Activated CD4-positive, alpha-beta T cell treated with anti-CD3 and anti-CD28 coated beads for 36 hours (primary cell): ENCODE measurements at regions of chr9 and their contacts with region 1.

Region 1: GRCh38 chr9:129641746-129642513 is at the start of gene ASB6:
- DNase-seq: peak; percentile 97
- ATAC-seq: peak; percentile 97
- H3K4me3 Mint-ChIP-seq: peak within 1 kb of the TSS; percentile 87
- H3K27ac Mint-ChIP-seq: peak within 1 kb of the TSS; percentile 73
- H3K4me1 Mint-ChIP-seq: peaks cover 18% of the 10 kb centered on the region
- H3K27me3 Mint-ChIP-seq: no peaks in the 10 kb centered on the region
- total RNA-seq, gene ASB6: 13.4 to 15.0 TPM

Region 2: DNA sequence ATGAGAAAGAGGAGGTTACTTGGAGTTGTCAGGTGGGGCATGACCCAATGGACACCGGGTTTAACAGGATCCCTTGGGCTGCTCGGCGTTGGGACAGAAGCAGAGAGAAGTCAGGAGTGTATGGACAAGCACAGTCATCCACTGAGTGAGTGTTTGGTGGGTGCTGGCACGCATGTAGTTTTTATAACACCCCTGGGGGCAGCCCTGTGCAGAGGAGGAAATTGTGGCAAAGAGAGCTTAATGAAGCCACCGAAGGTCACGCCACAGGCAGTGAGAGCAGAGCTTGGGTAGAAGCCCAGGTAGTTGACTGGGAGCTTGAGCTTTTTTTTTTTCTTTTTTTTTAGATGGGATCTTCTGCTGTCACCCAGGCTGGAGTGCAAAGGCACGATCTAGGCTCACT is 420.7 kb before region 1 on chr9:
- CTCF ChIA-PET with region 1: no interaction called
- POLR2A ChIA-PET with region 1: no interaction called
- intact Hi-C with region 1: no loop called
- DNase-seq: peak; percentile 34
- ATAC-seq: peak; percentile 61
- H3K4me3 Mint-ChIP-seq: no peak overlapping the region
- H3K27ac Mint-ChIP-seq: peak overlapping the region; percentile 4
- H3K4me1 Mint-ChIP-seq: peaks cover 28% of the 10 kb centered on the region
- H3K27me3 Mint-ChIP-seq: no peaks in the 10 kb centered on the region

Region 3: DNA sequence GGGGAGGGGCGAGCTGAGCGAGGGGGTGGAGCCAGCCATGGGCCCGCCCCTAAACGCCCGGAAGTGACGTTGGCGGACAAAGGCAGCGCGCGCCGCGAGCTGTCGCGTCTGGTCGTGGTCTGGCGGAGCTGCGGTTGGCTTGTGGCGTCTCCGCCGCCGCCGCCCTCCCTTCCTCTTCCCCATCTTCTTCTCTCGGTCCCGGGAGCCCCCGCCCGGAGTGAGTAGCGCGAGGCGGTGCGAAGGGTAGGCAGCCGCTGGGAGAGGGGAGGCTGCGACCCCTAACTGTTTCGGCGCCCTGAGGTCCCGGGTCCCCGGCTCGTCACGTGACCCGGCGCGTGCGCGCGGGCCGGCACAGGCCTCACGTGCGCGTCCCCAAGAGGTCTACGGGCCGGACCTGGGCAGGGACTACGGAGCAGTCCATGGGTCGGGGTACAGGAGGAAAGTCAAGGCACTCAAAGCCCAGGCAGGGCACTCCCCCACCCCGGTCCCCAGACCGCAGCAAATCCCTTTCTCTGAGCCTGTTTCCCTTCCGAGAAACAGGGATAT is 15.8 kb before region 1 on chr9 and contains the start of gene NTMT1:
- CTCF ChIA-PET with region 1: interaction called, 21 read pairs
- POLR2A ChIA-PET with region 1: interaction called, 5 read pairs
- intact Hi-C with region 1: loop called (anchors 1 kb)
- DNase-seq: peak; percentile 95
- ATAC-seq: peak; percentile 76
- H3K4me3 Mint-ChIP-seq: peak within 1 kb of the TSS; percentile 77
- H3K27ac Mint-ChIP-seq: peak within 1 kb of the TSS; percentile 93
- H3K4me1 Mint-ChIP-seq: peaks cover 52% of the 10 kb centered on the region
- H3K27me3 Mint-ChIP-seq: peaks cover 4% of the 10 kb centered on the region
- total RNA-seq, gene NTMT1: 50.1 to 69.2 TPM

Region 4: GRCh38 chr9:129719135-129719534 is 77.2 kb after region 1 on chr9:
- CTCF ChIA-PET with region 1: no interaction called
- POLR2A ChIA-PET with region 1: no interaction called
- intact Hi-C with region 1: loop called (anchors 2 to 10 kb)
- DNase-seq: peak; percentile 27
- ATAC-seq: no peak
- H3K4me3 Mint-ChIP-seq: no peak overlapping the region
- H3K27ac Mint-ChIP-seq: no peak overlapping the region
- H3K4me1 Mint-ChIP-seq: no peaks in the 10 kb centered on the region
- H3K27me3 Mint-ChIP-seq: peaks cover 4% of the 10 kb centered on the region

Region 5: DNA sequence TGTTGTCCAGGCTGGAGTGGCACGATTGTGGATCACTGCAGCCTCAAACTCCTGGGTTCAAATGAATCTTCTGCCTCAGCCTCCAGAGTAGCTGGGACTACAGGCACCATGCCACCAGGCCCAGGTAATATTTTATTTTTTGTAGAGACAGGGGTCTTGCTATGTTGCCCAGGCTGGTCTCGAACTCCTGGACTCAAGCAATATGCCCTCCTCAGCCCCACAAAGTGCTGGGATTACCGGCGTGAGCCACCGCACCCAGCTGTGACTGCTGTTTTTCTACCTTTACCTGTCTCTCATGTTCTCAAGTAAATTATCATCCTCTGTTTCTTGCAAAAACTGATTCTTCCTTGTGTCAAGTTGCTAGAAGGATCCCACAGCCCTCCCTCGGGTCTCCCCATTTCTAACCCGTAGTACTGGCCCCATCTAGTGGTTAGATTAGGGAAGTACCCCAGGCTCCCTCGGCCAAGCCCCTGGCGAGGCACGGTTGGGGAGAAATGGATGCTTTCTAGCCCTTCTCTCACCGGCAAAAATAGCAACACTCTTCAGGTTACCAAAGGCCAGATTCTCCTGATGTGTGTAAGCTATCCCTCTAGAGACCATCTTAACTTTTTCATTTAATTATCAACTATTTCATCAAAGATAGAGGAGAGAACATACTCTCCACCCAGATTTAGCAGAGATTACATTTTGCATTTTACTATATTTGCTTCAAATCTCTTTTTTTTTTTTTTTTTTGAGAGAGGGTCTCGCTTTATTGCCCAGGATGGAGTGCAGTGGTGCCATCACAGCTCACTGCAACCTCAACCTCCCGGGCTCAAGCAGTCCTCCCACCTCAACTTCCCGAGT is 141.8 kb after region 1 on chr9:
- CTCF ChIA-PET with region 1: interaction called, 6 read pairs
- POLR2A ChIA-PET with region 1: no interaction called
- intact Hi-C with region 1: loop called (anchors 1 to 5 kb)
- DNase-seq: peak; percentile 84
- ATAC-seq: peak; percentile 100
- H3K4me3 Mint-ChIP-seq: no peak overlapping the region
- H3K27ac Mint-ChIP-seq: peak overlapping the region; percentile 11
- H3K4me1 Mint-ChIP-seq: peaks cover 4% of the 10 kb centered on the region
- H3K27me3 Mint-ChIP-seq: peaks cover 2% of the 10 kb centered on the region

Region 6: GRCh38 chr9:129835021-129835871 is 193.3 kb after region 1 on chr9 and contains the starts of genes C9orf78 and USP20:
- CTCF ChIA-PET with region 1: no interaction called
- POLR2A ChIA-PET with region 1: no interaction called
- intact Hi-C with region 1: loop called in 1 of 2 experiments (anchors 1 kb)
- DNase-seq: peak; percentile 99
- ATAC-seq: peak; percentile 87
- H3K4me3 Mint-ChIP-seq: peak within 1 kb of the TSS; percentile 96
- H3K27ac Mint-ChIP-seq: peak within 1 kb of the TSS; percentile 96
- H3K4me1 Mint-ChIP-seq: peaks cover 55% of the 10 kb centered on the region
- H3K27me3 Mint-ChIP-seq: no peaks in the 10 kb centered on the region
- total RNA-seq, gene C9orf78: 42.8 to 59.8 TPM
- total RNA-seq, gene USP20: 37.6 to 48.5 TPM